ENCODE measurements at regions of chr6 and their contacts with region 1.

Region 1: DNA sequence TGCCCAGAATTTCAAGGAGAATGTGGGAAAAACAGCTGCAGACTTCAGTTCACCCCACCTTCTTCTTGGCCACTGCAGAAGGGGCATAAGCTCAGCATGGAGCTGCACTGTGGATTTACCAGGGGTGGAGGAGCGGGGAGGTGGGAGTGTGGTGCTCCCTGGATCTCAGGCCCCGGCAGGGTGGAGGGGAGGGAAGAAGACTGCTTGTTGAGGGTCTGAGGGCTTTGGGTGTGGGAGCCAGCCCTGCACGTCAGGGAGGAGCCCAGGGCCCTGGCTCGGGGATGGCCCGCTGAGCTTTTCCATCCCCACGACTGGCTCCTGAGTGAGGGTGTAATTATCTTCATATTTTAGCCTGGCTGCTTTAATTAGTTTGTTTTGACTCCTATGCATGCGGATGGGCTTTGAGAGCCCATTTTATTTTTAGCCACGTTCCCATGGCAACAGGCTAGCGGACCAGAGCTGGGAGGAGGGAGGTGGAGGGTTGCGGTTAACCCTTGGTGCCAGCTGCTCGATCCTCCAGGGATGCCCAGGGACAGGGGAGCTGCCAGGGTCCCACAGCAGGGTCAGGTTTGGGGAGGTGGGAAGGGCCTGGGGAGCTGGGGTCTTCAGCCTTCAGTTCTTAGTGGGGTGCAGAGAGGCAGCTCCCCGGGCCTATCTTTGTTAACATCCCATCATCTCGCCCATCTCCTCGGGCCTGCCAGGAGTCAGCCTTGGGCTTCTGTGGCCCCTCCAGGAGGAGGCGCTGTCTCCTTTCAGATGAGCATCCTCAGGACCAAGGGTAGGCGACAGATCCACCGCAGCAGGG is 68.2 kb downstream of the RAB44 start:
- DNase-seq: no peak
- ATAC-seq: peak; percentile 94
- H3K4me3 ChIP-seq: no peak overlapping the region
- H3K27ac ChIP-seq: no peak overlapping the region
- H3K4me1 ChIP-seq: peaks cover 5% of the 10 kb centered on the region
- H3K27me3 ChIP-seq: no peaks in the 10 kb centered on the region
- CTCF ChIP-seq: peak; percentile 95

Region 2: DNA sequence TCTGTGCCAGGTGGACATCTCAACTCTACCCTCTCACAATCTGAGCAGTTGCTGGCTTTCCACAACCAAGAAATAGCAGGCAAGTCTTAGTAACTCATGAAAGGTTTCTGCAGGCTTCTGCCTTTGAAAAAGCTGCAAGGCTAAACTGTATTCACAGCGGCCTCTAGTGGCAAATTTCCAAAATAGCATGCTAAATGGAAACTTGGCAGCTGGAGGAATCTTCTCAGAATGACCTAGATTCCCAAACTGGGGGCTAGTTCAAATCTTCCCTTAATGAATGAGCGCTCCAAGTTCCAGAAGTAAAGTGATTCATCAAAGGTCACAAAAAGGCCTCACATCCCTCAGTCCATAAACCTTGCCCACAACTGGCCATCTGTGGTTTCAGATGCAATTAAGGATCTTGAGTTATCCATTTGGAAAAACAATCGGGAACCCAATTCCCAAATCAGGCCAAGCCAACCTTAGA is 85.4 kb after region 1 on chr6:
- CTCF ChIA-PET with region 1: interaction called, 6 read pairs
- POLR2A ChIA-PET with region 1: no interaction called
- in situ Hi-C with region 1: no loop called
- intact Hi-C with region 1: loop called (anchors 2 kb)
- DNase-seq: no peak
- ATAC-seq: no peak; the same call in 1 of the 2 replicates
- H3K4me3 ChIP-seq: no peak overlapping the region
- H3K27ac ChIP-seq: no peak overlapping the region
- H3K4me1 ChIP-seq: no peaks in the 10 kb centered on the region; the same call in 1 of the 2 replicates
- H3K27me3 ChIP-seq: no peaks in the 10 kb centered on the region
- CTCF ChIP-seq: peak; percentile 87

Region 3: DNA sequence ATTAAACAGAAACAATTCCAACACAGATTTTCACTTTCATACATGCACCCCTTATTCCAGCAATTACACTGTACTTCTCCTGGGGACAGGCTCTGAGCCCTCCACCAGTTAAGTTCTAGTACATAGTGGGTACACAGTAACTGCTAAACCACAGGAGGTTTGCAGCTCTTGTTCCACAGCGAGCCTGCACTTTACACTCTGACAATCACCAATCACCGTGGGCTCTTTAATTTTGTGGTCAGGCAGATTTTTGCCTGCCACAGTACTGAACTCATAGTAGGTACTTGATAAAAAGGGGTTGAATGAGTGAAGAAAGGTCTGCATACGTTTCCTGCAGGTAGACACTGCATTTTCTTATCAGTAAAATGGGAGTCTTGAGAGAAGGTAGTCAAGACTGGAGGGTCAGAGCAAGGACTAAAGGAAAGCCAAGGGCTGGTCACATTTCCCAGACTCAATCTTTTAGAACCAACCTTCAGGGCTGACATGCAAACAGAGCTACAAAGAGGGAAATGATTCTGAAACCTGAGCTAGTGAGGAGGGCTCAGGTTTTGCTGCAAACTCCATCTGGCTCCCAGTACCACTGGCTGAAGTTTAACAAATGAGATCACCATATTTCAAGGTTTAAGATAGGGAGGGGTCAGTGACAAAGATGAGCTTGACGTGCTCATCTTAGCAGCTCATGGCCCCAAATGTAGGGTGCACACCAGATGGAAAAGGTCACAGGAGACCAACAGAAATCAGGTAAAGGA is 1469.3 kb after region 1 on chr6:
- CTCF ChIA-PET with region 1: no interaction called
- POLR2A ChIA-PET with region 1: no interaction called
- in situ Hi-C with region 1: no loop called
- intact Hi-C with region 1: no loop called
- DNase-seq: no peak
- ATAC-seq: no peak
- H3K4me3 ChIP-seq: no peak overlapping the region
- H3K27ac ChIP-seq: no peak overlapping the region
- H3K4me1 ChIP-seq: no peaks in the 10 kb centered on the region
- H3K27me3 ChIP-seq: no peaks in the 10 kb centered on the region
- CTCF ChIP-seq: no peak

Measured in Panc1 (cell line).